ENCODE measurements at regions of chr1 and their contacts with region 1.

Region 1: GRCh38 chr1:196667131-196667530 is 15.3 kb downstream of the CFH start:
- DNase-seq: no peak
- H3K4me3 ChIP-seq: no peak overlapping the region
- H3K27ac ChIP-seq: no peak overlapping the region
- H3K4me1 ChIP-seq: no peaks in the 10 kb centered on the region
- H3K27me3 ChIP-seq: no peaks in the 10 kb centered on the region
- CTCF ChIP-seq: no peak
- POLR2A ChIP-seq: no peak

Region 2: DNA sequence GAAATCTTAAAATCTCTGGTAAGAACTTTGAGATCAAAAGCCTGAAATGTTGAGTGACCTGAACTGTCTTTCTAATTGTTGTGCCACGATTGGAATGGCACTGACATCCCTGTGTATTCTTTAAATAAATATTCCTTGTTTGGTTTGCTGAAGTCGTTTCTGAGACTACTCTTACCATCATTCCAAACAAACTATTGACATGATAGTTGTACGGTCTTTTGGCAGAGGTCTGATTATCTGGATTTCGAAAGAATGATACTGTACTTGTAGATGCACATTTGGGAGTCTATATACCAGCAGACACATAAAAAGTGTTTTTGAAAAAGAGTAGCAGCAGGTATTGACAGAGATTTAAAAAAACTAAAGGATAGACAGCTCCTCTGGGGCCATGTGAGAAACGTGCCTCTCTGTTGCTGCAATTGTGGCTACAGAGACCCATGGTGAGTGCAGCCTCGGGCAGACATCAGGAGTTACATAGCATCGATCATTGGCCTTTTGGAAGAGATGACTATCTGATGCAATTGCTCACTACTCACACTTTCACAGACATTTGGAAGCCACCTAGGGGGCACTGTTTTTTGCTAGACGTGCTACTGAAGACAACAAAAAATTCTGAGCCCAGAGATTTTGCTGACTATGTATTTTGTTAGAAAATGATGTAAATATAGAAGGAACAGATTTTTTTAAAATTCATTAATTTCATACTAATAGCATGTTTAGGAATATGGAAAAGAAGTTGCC is 523.4 kb before region 1 on chr1:
- intact Hi-C with region 1: loop called (anchors 5 kb)
- DNase-seq: no peak
- H3K4me3 ChIP-seq: no peak overlapping the region
- H3K27ac ChIP-seq: no peak overlapping the region
- H3K4me1 ChIP-seq: no peaks in the 10 kb centered on the region
- H3K27me3 ChIP-seq: no peaks in the 10 kb centered on the region
- CTCF ChIP-seq: no peak
- POLR2A ChIP-seq: no peak

Region 3: DNA sequence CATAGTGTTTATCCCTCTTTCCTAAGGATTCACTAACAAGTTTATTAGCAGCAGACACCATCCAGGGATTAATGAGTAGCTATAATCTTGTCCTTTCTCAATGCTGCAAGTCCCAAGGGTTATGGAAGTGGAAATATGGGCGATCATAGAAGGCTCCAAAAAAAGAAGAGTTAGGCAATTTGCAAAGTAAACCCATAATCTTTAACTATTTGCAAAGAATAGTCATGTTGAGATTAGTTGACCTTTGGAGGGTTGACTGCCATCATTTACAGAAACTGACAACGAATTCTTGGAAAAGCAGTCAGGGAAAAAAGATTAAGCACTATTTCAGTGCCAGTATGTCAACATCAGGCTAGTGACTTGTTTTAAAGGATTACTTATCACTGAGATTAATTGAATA is 228.8 kb before region 1 on chr1:
- intact Hi-C with region 1: no loop called
- DNase-seq: no peak
- H3K4me3 ChIP-seq: no peak overlapping the region
- H3K27ac ChIP-seq: no peak overlapping the region
- H3K4me1 ChIP-seq: no peaks in the 10 kb centered on the region
- H3K27me3 ChIP-seq: no peaks in the 10 kb centered on the region
- CTCF ChIP-seq: no peak
- POLR2A ChIP-seq: no peak

Measured in spleen (tissue), 13 donors.